HEK293 (cell line): ENCODE measurements at regions of chr7 and their contacts with region 1.

Region 1: DNA sequence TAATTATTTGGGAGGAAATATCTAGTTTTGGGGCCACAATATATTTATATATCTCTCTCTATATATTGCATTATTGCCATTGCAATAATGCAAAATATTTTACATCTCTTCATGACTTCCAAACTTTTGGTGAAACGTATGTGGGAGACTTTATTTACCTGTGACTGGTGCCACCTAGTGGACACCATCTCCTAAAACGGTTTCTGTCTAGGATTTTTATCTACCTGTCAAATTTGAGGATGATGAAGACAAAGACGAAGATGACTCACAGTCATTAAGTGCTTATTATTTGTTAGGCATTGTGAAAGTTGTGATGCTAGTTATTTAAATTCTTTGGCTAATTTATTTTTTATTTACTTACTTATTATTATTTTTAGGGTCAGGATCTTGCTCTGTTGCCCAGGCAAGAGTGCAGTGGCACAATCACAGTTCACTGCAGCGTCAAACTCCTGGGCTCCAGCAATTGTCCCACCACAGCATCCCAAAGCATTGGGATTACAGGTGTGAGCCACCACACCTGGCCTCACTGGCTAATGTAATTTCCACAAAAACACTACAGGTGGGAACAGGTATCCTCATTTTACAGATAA is 18.7 kb upstream of the CBLL1 start:
- H3K4me3 ChIP-seq: no peak overlapping the region
- H3K27ac ChIP-seq: no peak overlapping the region
- H3K4me1 ChIP-seq: no peaks in the 10 kb centered on the region
- CTCF ChIP-seq: peak; percentile 27; the same call in 1 of the 2 replicates

Region 2: GRCh38 chr7:107462740-107463444 is 262.4 kb before region 1 on chr7:
- CTCF ChIA-PET with region 1: interaction called, 28 read pairs
- POLR2A ChIA-PET with region 1: no interaction called
- H3K4me3 ChIP-seq: no peak overlapping the region
- H3K27ac ChIP-seq: no peak overlapping the region
- H3K4me1 ChIP-seq: no peaks in the 10 kb centered on the region
- CTCF ChIP-seq: peak; percentile 71

Region 3: DNA sequence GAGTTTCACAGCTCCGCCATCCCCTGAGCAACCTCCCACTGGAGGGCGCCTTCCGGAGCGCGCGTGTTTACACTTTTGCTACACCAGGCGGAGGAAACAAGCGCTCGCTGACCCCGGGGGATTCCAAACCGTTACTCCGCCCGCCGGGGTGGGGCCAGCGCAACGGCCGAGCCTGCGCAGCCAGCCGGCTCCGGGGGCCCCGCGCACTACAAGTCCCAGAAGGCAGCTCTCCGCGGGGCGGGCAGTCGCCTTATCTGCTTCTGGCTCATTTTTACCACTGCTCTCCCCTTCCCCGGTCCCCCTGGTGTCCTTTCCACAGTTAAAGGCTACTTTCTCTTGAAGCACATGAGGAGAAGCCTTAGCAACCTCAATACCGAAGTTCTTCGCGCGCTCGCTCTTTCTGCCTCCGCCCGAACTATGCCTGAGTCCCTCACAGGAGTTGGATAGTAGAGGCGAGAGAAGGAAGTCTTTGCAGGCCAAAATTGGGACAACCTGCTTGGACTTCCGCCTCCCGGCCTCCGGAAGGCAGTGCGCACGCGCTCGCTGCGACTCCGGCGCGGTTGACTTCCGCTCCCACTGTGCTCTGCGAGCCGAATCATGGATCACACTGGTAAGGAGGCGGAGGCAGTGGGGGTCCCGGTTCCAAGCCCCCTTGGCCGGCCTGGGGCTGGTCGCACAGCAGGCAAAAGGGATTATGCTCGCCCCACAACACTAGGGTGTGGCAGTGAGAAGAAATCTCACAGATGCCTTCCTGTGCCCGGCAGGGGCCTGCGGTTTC is 18.5 kb after region 1 on chr7 and contains the start of gene CBLL1:
- CTCF ChIA-PET with region 1: interaction called, 19 read pairs
- POLR2A ChIA-PET with region 1: interaction called, 3 read pairs
- H3K4me3 ChIP-seq: peak within 1 kb of the TSS; percentile 73
- H3K27ac ChIP-seq: peak within 1 kb of the TSS; percentile 82
- H3K4me1 ChIP-seq: peaks cover 2% of the 10 kb centered on the region; the same call in 1 of the 2 replicates
- CTCF ChIP-seq: peak; percentile 94

Region 4: DNA sequence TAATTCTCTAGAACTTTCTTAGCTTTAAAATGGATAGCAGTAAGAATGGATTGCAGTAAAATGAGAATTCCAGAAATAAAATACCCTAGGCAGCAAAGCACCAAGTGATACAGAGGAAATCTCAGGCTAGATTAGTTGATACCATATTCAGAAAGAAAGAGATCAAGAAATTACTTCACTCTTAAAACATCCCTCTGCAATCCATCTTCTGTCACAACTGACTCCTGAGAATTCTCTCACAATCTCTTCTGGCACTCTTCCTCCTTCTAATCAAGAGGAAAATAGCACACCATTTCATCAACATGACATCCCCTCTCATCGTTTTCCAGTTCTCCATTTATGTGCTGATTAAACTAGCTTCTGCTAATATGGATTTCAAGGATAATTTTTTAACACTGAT is 319.9 kb after region 1 on chr7:
- CTCF ChIA-PET with region 1: no interaction called
- POLR2A ChIA-PET with region 1: no interaction called
- H3K4me3 ChIP-seq: no peak overlapping the region
- H3K27ac ChIP-seq: no peak overlapping the region
- H3K4me1 ChIP-seq: no peaks in the 10 kb centered on the region
- CTCF ChIP-seq: no peak